PC-9 (cell line): ENCODE measurements at regions of chr6 and their contacts with region 1.

Region 1: DNA sequence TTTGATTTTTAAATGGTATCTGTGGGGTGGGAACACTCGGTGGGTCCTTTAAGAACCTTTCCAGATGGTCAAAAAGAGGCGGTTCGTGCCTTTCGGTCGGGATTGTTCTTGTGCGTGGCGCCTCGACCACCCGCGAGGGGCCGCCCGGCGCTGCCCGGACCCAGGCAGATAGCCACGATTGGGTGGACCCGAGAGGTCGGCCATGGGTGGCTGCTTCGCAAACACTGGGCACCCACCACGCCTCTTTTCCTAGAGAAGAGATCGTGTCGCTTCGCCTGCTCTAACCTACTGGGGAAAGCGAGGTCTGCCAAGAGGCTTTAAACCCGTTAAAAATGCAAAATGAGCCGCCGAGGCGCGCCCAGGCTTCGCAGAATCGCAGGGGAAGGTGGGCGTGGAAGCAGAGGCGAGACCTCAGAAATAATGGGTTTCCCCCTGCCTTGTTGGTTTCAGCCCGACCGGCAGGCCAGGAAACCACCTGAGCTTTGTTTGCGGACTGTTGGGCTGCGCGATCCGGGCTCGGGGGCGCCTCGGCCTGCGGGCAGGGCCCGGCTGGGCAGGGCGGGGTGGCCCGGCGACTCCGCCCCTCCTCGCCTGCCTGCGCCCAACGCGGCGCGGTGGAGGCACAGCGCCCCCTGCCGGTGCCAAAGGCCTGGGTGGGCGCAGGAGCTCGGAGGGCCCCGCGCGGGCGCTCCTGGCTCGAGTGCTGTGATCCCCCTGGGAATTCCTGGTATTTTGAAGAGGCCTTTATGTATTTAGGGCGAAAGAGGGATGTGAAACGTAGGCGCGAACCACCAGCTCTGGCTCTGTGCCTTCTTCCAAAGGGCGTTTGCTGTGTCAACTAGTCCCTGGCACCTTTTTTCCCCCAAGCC is 1.6 kb downstream of the MARCKS start:
- DNase-seq: peak; percentile 90 to 94
- H3K4me3 ChIP-seq: peak overlapping the region; percentile 100
- H3K27ac ChIP-seq: peak overlapping the region; percentile 98
- H3K4me1 ChIP-seq: peaks cover 37% of the 10 kb centered on the region
- H3K27me3 ChIP-seq: no peaks in the 10 kb centered on the region
- CTCF ChIP-seq: peak; percentile 97

Region 2: GRCh38 chr6:113182370-113183141 is 676.2 kb before region 1 on chr6:
- CTCF ChIA-PET with region 1: no interaction called
- POLR2A ChIA-PET with region 1: interaction called, 8 read pairs
- intact Hi-C with region 1: loop called (anchors 1 kb)
- DNase-seq: peak in 1 of 2 experiments; percentile 79
- H3K4me3 ChIP-seq: no peak overlapping the region
- H3K27ac ChIP-seq: peak overlapping the region; percentile 30
- H3K4me1 ChIP-seq: peaks cover 18% of the 10 kb centered on the region
- H3K27me3 ChIP-seq: no peaks in the 10 kb centered on the region
- CTCF ChIP-seq: no peak

Region 3: DNA sequence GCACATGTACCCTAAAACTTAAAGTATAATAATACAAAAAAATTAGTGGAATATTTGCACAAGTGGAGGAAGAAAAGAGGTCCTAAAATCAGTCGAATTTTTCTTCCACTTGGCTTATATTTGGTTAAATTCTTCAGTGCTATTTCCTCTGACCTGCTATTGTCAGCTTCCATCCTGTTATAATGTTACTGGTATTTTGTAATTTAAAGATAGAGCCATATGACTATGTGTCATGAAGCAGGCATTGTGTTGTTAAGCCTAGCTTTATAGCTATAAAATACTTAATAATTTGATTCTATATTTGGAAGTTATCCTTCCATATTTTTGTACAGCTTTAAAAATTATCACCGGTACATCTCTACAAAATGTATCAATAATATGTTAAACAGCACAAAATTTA is 457.5 kb before region 1 on chr6:
- CTCF ChIA-PET with region 1: no interaction called
- POLR2A ChIA-PET with region 1: interaction called, 12 read pairs
- intact Hi-C with region 1: no loop called
- DNase-seq: no peak
- H3K4me3 ChIP-seq: no peak overlapping the region
- H3K27ac ChIP-seq: no peak overlapping the region
- H3K4me1 ChIP-seq: peaks cover 15% of the 10 kb centered on the region
- H3K27me3 ChIP-seq: no peaks in the 10 kb centered on the region
- CTCF ChIP-seq: no peak

Region 4: GRCh38 chr6:113495506-113495905 is 363.2 kb before region 1 on chr6:
- CTCF ChIA-PET with region 1: interaction called, 3 read pairs
- POLR2A ChIA-PET with region 1: no interaction called
- intact Hi-C with region 1: loop called (anchors 1 kb)
- DNase-seq: peak in 1 of 2 experiments; percentile 70
- H3K4me3 ChIP-seq: no peak overlapping the region
- H3K27ac ChIP-seq: peak overlapping the region; percentile 75
- H3K4me1 ChIP-seq: peaks cover 59% of the 10 kb centered on the region
- H3K27me3 ChIP-seq: no peaks in the 10 kb centered on the region
- CTCF ChIP-seq: no peak

Region 5: GRCh38 chr6:113654396-113654795 is 204.3 kb before region 1 on chr6:
- CTCF ChIA-PET with region 1: interaction called, 5 read pairs
- POLR2A ChIA-PET with region 1: no interaction called
- intact Hi-C with region 1: loop called (anchors 5 kb)
- DNase-seq: peak; percentile 81 to 95
- H3K4me3 ChIP-seq: 0 out of 2 replicates have a peak overlapping the region, but pooled peaks have one; percentile 20
- H3K27ac ChIP-seq: peak overlapping the region; percentile 75
- H3K4me1 ChIP-seq: peaks cover 27% of the 10 kb centered on the region
- H3K27me3 ChIP-seq: no peaks in the 10 kb centered on the region
- CTCF ChIP-seq: no peak

Region 6: DNA sequence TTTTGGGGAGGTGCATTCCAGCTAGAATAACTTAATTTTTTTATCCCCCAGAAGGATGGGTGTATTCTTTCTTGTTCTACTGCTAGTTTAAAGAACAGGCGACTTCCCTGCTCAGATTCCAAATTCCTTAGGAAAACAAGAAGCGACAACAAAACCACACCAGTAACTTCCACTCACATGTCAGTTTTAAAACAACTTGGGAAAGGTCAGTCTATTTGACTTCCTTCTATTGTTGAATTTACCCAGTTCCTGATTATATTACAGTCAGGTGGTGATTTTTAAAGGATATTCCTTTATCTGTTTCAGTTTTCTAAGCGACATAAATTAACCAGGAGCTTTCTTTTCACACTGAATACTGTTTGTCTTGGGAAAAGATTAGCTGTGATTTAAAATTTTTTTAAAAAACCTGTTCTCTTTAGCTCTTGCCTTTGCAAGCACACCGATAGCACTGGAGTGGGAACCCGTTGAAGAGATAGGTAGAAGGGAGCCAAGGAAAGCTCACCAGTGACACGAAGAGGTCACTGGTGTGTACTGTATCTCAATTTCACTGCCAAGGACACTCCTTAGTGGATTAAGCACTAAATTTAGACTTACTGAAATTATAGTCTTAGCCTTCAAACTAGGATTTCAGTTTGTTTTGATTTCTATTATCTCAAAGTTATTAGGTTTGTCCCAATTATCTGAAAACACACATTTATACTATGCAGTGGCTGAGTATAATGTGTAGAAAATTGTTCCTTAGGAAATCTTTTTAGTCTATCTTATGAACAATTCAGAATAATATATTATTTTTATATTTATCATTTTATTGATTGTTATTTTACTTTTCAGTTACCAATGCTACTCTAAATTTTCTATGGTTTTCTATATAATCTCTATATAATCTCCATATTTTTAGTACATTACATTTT is 20.7 kb after region 1 on chr6:
- CTCF ChIA-PET with region 1: interaction called, 21 read pairs
- POLR2A ChIA-PET with region 1: interaction called, 6 read pairs
- intact Hi-C with region 1: no loop called
- DNase-seq: peak; percentile 54 to 77
- H3K4me3 ChIP-seq: no peak overlapping the region
- H3K27ac ChIP-seq: peak overlapping the region; percentile 49
- H3K4me1 ChIP-seq: peaks cover 10% of the 10 kb centered on the region
- H3K27me3 ChIP-seq: no peaks in the 10 kb centered on the region
- CTCF ChIP-seq: peak; percentile 85